ENCODE measurements at regions of chr6 and their contacts with region 1.

Region 1: GRCh38 chr6:27893059-27893835 is 18.9 kb downstream of the OR2B2 start:
- DNase-seq: peak; percentile 79 to 91 (median 80)
- ATAC-seq: peak; percentile 86
- H3K4me3 ChIP-seq: peak overlapping the region in 1 of 2 donors; percentile 5
- H3K27ac ChIP-seq: peak overlapping the region in 3 of 4 donors; percentile 25 to 61 (median 48)
- H3K4me1 ChIP-seq: peaks cover 38% of the 10 kb centered on the region
- H3K27me3 ChIP-seq: peaks cover 0 to 5% of the 10 kb centered on the region in 2 donors
- CTCF ChIP-seq: no peak
- POLR2A ChIP-seq: peak in 2 of 3 donors; percentile 91 to 93

Region 2: DNA sequence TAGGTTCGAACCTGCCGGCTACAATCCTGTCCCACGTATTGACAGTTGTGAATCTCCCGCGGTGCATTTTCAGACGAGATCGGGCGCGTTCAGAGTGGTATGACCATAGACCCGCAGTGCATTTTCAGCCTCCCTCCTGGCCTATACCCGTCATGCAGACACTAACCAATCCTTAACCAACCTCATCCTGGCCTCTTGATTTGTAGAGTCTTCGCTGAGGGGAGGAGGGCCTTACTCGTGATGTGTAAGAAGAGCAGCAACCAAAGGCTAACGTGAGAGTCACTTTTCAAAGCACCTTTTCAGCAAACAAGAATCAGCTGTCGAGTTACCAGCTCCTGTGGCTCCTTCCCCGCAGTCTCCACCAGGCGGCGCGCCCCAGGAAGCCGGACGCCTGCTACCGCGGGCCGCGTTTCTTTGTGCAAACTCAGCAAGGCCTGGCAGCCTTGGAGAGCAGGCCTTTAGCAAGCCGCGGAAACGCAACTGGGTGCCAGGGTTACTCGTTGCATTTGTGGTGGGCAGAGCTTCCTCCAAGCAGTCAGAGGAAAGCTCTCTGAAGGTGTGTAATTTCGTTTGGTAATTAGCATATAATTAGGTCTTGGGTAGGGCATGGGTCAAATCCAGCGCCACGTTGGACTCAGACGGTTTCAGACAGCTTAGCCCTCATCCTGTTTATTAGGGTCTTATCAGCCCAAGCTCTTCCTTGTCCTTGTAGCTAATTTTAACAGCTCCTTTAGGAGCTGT is 120.8 kb before region 1 on chr6:
- intact Hi-C with region 1: loop called (anchors 10 kb)
- DNase-seq: peak; percentile 85 to 90 (median 88)
- ATAC-seq: peak; percentile 99
- H3K4me3 ChIP-seq: no peak overlapping the region
- H3K27ac ChIP-seq: no peak overlapping the region
- H3K4me1 ChIP-seq: peaks cover 8% of the 10 kb centered on the region
- H3K27me3 ChIP-seq: no peaks in the 10 kb centered on the region
- CTCF ChIP-seq: peak; percentile 82 to 92 (median 90)
- POLR2A ChIP-seq: no peak

Region 3: DNA sequence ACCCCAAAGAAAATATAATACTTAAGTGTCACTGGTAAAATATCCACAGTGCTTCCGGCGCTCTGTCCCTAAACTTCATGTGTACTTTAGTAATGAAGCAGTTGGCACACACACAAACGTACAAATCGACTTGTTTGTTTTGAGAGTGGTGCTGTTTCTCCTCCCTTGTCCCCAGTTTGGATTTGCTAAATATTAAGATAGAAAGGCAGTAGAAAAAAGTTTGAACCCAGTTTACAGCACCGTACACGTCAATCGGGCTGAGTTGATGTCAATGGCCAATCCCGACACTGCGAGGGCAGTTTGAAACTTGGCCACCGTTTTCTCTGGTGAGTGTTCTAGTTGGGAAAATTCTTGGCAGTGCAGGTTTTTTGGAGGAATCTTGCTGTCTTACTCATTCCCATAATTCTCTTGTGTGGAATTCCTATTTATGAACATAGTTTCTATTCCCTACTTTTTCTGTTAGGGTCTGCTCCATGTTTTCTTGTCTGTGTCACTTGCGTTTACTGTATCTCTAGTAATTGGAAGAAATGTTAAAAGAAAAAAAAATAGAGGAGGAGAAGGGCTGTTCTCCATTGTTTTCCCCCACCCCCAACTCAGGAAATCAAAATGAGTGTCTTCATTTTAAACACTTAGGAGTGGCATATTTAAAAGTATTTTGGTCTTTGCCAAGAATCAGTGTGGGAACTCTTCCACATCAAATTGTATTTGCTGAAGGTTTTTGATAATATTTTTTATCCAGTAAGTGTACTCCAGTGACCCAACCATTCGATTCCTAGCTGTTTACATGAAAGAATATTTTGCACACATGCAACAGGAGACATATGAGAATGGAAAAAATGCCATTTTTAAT is 53.4 kb before region 1 on chr6:
- intact Hi-C with region 1: no loop called
- DNase-seq: peak; percentile 29 to 58 (median 42)
- ATAC-seq: no peak
- H3K4me3 ChIP-seq: peak overlapping the region; percentile 20 to 31
- H3K27ac ChIP-seq: peak overlapping the region in 3 of 4 donors; percentile 94 to 98 (median 96)
- H3K4me1 ChIP-seq: peaks cover 28% of the 10 kb centered on the region
- H3K27me3 ChIP-seq: no peaks in the 10 kb centered on the region
- CTCF ChIP-seq: no peak
- POLR2A ChIP-seq: no peak